ENCODE measurements at regions of chr12 and their contacts with region 1.

Region 1: DNA sequence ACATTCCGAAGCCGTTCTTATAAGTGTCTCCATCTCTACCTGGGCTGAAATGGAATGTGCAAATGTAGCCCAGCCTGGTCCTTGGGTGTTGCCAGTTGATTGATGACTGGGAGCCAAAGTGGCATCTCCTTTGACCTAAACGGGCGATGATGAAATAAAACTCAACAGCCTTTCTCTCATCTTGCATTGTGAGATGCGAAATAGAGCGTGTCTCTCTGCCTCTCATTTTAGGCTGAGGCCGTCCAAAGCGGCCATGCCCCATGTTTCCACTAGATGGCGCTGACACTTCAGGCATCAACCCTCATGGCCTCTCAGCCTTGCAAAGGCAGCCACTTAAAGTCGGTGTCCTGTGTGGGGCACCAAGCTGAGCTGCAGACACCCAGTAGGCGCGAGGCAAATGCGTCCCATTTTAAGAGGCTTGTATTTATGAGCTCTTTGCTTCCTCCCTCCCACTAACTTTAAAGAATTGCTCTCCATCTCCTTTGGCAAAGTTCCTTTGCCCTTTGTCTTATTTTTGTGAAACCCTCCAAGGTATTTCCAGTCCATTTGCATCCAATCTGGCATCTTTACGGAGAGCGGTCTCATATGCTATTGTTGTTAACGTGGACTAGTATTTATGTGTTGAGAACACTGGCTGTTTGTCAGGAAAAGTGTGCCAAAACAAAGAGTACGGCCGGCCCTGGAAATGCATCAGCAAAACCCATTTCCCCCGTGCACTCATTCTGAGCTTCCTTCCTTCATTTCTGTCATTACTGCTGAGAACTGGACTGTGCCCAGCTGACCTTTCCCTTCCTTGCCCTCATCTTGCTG is 25.0 kb downstream of the GPRC5A start:
- DNase-seq: peak; percentile 65 to 95
- H3K4me3 ChIP-seq: no peak overlapping the region
- H3K27ac ChIP-seq: peak overlapping the region; percentile 47 to 64
- H3K4me1 ChIP-seq: peaks cover 0 to 13% of the 10 kb centered on the region in 2 donors
- H3K27me3 ChIP-seq: no peaks in the 10 kb centered on the region
- CTCF ChIP-seq: peak; percentile 93 to 97 (median 96)

Region 2: GRCh38 chr12:13211859-13212664 is 295.7 kb after region 1 on chr12:
- intact Hi-C with region 1: loop called (anchors 2 kb)
- DNase-seq: peak in 1 of 2 donors; percentile 84
- H3K4me3 ChIP-seq: no peak overlapping the region
- H3K27ac ChIP-seq: no peak overlapping the region
- H3K4me1 ChIP-seq: peaks cover 0 to 10% of the 10 kb centered on the region in 2 donors
- H3K27me3 ChIP-seq: no peaks in the 10 kb centered on the region
- CTCF ChIP-seq: peak; percentile 71 to 86 (median 78)

Measured in ascending aorta (tissue), 2 donors.